GM18951 (cell line): ENCODE measurements at regions of chr10 and their contacts with region 1.

Region 1: GRCh38 chr10:32350811-32351350 is 3.9 kb upstream of the EPC1 start:
- POLR2A ChIP-seq: no peak

Region 2: GRCh38 chr10:32131388-32131787 is 219.5 kb before region 1 on chr10:
- in situ Hi-C with region 1: no loop called
- POLR2A ChIP-seq: no peak

Region 3: GRCh38 chr10:32256613-32257437 is 94.1 kb before region 1 on chr10:
- in situ Hi-C with region 1: loop called (anchors 10 kb)
- POLR2A ChIP-seq: no peak

Region 4: DNA sequence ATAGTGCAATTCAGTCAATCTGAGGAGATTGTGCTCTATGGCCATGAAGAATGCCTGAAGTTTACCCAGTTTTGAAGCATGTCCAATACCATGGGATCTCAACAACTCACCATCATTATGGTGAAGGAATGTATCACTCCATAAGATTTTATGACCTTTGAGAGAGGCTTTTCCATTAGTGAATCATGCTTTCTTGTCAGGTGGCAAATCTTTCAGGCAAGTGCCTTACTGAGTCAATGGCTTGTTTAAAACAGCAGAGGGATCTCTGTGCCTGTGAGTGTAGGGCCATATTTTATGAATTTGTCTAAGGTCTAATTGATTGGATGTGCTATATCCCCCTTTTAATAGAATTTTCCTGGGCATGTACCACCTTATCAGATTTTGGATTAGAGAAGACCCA is 226.6 kb after region 1 on chr10:
- in situ Hi-C with region 1: no loop called
- POLR2A ChIP-seq: no peak

Region 5: DNA sequence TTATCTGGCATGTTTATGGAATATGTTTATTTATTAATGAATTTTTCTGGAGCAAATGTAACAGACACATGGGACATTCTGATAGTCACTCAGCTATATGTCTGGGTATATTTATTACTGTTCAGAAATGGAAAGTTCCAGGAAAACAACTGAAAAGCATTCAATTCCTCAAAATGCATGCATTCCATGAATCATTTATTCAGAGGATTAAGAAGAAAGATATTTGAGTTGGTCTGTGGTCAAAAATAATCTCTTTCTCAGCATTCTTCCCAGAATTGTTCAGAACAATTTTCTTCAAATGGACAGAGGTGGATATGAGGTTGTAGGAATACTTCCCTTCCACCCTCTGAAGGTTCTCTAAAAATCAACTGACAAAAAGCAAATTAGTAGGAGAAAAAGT is 704.7 kb after region 1 on chr10:
- in situ Hi-C with region 1: no loop called
- POLR2A ChIP-seq: no peak